MCF 10A (cell line): ENCODE measurements at regions of chr22 and their contacts with region 1.

Region 1: GRCh38 chr22:39520054-39520891 is at the start of gene ATF4:
- DNase-seq: peak; percentile 98
- H3K4me3 Mint-ChIP-seq: peak within 1 kb of the TSS; percentile 93
- H3K27ac Mint-ChIP-seq: peak within 1 kb of the TSS; percentile 100
- H3K4me1 Mint-ChIP-seq: peaks cover 23% of the 10 kb centered on the region
- H3K27me3 Mint-ChIP-seq: no peaks in the 10 kb centered on the region
- CTCF ChIP-seq: no peak
- total RNA-seq, gene ATF4: 717 and 764 TPM in 2 replicates

Region 2: DNA sequence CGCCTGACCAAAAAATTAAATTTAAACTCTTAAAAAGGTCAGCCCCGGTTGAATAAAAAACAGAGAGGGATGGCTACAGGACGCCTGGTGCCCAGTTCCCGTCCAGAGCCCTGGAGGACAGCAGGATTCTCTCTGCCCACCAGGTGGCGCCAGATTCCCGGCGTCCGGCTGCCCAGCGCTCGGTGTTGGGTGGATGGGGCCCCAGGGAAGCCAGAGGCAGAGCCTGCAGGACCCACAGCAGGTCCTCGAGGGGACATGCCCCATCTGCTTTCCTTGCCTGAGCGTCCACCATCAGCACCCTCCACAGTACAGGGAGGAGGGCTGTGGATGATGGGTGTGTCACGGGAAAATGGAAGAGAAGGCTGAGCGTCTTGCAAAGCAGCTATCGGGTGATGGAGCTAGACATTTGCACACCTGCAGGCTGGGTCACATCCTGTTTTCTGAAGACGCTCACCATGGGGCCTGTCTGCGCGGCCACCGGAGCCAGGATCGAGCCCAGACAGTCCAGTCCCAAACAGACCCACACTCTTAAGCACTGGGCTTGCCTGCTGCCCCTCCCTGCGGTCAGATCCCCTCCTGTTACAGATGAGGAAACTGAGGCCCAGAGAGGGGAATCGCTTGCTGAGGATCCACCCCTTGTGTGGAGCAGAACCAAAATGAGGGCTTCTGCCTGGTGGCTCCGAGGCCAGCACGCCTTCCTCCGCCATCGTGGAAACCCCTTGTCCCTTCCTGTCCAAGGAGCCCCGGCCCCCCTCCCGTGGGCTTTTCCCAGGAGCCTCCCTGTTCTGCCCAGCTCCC is 349.2 kb before region 1 on chr22:
- CTCF ChIA-PET with region 1: no interaction called
- POLR2A ChIA-PET with region 1: interaction called, 5 read pairs
- intact Hi-C with region 1: loop called (anchors 10 kb)
- DNase-seq: peak; percentile 76
- H3K4me3 Mint-ChIP-seq: no peak overlapping the region
- H3K27ac Mint-ChIP-seq: no peak overlapping the region
- H3K4me1 Mint-ChIP-seq: peaks cover 36% of the 10 kb centered on the region
- H3K27me3 Mint-ChIP-seq: no peaks in the 10 kb centered on the region
- CTCF ChIP-seq: peak; percentile 96

Region 3: GRCh38 chr22:39490135-39490798 is 30.0 kb before region 1 on chr22:
- CTCF ChIA-PET with region 1: interaction called, 7 read pairs
- POLR2A ChIA-PET with region 1: interaction called, 15 read pairs
- intact Hi-C with region 1: no loop called
- DNase-seq: peak; percentile 86
- H3K4me3 Mint-ChIP-seq: no peak overlapping the region
- H3K27ac Mint-ChIP-seq: no peak overlapping the region
- H3K4me1 Mint-ChIP-seq: no peaks in the 10 kb centered on the region
- H3K27me3 Mint-ChIP-seq: no peaks in the 10 kb centered on the region
- CTCF ChIP-seq: no peak

Region 4: GRCh38 chr22:39496131-39496838 is 24.0 kb before region 1 on chr22:
- CTCF ChIA-PET with region 1: interaction called, 7 read pairs
- POLR2A ChIA-PET with region 1: interaction called, 58 read pairs
- intact Hi-C with region 1: no loop called
- DNase-seq: peak; percentile 58
- H3K4me3 Mint-ChIP-seq: no peak overlapping the region
- H3K27ac Mint-ChIP-seq: no peak overlapping the region
- H3K4me1 Mint-ChIP-seq: peaks cover 2% of the 10 kb centered on the region
- H3K27me3 Mint-ChIP-seq: no peaks in the 10 kb centered on the region
- CTCF ChIP-seq: peak; percentile 61

Region 5: DNA sequence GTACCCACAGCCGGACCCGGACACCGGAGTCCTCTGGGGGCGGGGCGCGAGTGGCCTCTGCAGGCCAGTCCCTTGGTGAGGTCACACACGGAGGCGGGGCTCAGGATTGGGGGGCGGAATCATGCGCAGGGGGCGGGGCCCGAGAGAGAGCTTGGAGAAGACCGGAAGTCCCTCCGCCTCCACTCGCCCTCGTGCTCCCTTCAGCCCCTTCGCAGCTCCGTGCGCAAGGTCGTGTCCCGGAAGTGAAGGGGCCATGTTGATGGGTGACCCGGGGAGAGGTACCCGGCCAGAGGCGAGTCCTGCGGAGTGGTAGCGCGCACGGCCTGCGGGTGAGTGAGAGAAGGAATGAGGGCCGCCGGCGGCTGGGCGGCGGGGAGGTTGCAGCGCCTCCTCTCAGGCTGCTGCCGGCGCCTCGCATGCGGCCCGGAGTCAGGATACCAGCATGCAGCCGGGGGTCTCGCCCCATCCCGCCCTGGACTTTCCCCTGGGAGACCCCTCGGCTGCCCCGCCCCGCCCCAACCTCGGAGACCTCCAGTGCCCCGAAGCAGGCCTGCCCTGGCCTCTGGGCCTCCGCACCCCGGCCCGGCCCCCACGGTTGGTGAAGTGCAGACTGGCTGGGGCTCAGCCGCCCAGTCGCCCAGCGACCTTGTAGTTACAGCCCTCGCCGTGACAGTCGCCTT is 18.0 kb before region 1 on chr22 and contains the start of gene MIEF1:
- CTCF ChIA-PET with region 1: interaction called, 7 read pairs
- POLR2A ChIA-PET with region 1: interaction called, 58 read pairs
- intact Hi-C with region 1: loop called (anchors 2 kb)
- DNase-seq: peak; percentile 96
- H3K4me3 Mint-ChIP-seq: peak within 1 kb of the TSS; percentile 79
- H3K27ac Mint-ChIP-seq: peak within 1 kb of the TSS; percentile 59
- H3K4me1 Mint-ChIP-seq: peaks cover 24% of the 10 kb centered on the region
- H3K27me3 Mint-ChIP-seq: no peaks in the 10 kb centered on the region
- CTCF ChIP-seq: no peak
- total RNA-seq, gene MIEF1: 37.0 and 40.2 TPM in 2 replicates

Region 6: DNA sequence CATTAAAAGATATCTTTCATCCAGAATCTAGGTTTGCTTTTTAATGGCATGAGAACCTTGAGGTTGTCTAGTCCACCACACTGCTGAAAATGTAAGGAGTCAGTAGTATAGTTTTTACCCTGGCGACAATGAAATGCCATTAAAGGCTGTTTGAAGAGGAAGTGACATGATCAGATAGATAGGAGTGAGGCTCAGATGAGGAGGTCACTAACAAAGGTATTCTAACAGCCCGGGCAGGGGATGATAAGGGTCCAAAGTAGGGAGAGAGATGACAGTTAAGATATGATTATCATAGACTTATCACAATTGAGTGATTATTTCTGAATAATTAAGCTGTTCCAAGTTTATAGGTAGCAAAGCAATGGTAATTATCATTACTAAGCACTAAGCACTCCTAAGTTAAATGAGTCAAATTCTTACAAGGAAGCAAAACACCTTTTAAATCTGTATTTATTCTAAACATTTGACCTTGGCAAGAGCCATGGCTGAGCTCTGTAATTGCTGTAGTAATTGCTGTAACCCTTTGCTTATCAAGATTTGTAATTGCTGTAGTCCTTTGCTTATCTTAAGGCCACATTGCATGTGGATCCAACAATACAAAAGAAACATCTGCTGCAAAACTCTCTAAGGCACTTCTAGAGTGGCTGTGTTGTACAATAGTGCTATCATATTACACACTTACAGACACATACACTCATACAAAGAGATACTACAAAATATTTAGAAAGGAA is 280.7 kb after region 1 on chr22:
- CTCF ChIA-PET with region 1: no interaction called
- POLR2A ChIA-PET with region 1: no interaction called
- intact Hi-C with region 1: no loop called
- DNase-seq: no peak
- H3K4me3 Mint-ChIP-seq: no peak overlapping the region
- H3K27ac Mint-ChIP-seq: no peak overlapping the region
- H3K4me1 Mint-ChIP-seq: no peaks in the 10 kb centered on the region
- H3K27me3 Mint-ChIP-seq: peaks cover 81% of the 10 kb centered on the region
- CTCF ChIP-seq: no peak